Activated CD4-positive, alpha-beta memory T cell treated with anti-CD3 and anti-CD28 coated beads for 36 hours (primary cell): ENCODE measurements at regions of chr7 and their contacts with region 1.

Region 1: GRCh38 chr7:123865517-123866117 is 20.6 kb downstream of the HYAL4 start:
- DNase-seq: peak; percentile 36
- H3K4me3 Mint-ChIP-seq: no peak overlapping the region
- H3K27ac Mint-ChIP-seq: no peak overlapping the region
- H3K4me1 Mint-ChIP-seq: no peaks in the 10 kb centered on the region
- H3K27me3 Mint-ChIP-seq: peaks cover 4% of the 10 kb centered on the region

Region 2: DNA sequence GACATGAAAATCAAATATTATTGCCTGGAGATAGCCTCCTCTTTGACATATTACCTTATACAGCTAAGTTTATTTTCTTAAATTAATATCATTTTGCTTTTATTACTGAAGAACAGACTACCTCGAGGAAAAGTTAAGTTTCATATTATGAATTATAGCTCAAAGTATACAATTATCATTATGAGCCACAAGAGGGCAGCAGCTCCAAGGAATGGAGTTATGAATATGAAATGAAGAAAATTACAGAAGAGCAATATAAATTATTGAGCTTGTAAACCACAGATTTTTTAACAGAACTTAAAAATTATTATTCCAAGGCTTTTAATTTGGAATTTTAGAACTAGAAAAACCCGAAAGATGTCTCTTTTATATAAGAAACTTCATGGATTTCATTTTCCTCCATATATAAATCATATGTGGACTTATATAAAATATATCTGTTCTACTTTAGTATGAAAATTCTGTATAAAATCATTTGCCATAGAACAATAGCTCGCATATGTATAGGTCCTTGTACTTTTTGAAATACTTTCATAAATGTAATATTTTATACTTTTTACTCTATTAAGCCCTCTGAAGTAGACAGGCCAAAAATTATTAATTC is 371.3 kb before region 1 on chr7:
- CTCF ChIA-PET with region 1: interaction called, 5 read pairs
- POLR2A ChIA-PET with region 1: no interaction called
- intact Hi-C with region 1: loop called (anchors 1 kb)
- DNase-seq: peak; percentile 14
- H3K4me3 Mint-ChIP-seq: no peak overlapping the region
- H3K27ac Mint-ChIP-seq: no peak overlapping the region
- H3K4me1 Mint-ChIP-seq: no peaks in the 10 kb centered on the region
- H3K27me3 Mint-ChIP-seq: peaks cover 11% of the 10 kb centered on the region

Region 3: GRCh38 chr7:123624527-123625183 is 241.0 kb before region 1 on chr7:
- CTCF ChIA-PET with region 1: interaction called, 3 read pairs
- POLR2A ChIA-PET with region 1: no interaction called
- intact Hi-C with region 1: loop called (anchors 2 kb)
- DNase-seq: peak; percentile 80
- H3K4me3 Mint-ChIP-seq: no peak overlapping the region
- H3K27ac Mint-ChIP-seq: no peak overlapping the region
- H3K4me1 Mint-ChIP-seq: no peaks in the 10 kb centered on the region
- H3K27me3 Mint-ChIP-seq: no peaks in the 10 kb centered on the region

Region 4: GRCh38 chr7:123635551-123636359 is 229.9 kb before region 1 on chr7:
- CTCF ChIA-PET with region 1: interaction called, 15 read pairs
- POLR2A ChIA-PET with region 1: no interaction called
- intact Hi-C with region 1: loop called (anchors 5 kb)
- DNase-seq: no peak
- H3K4me3 Mint-ChIP-seq: no peak overlapping the region
- H3K27ac Mint-ChIP-seq: no peak overlapping the region
- H3K4me1 Mint-ChIP-seq: no peaks in the 10 kb centered on the region
- H3K27me3 Mint-ChIP-seq: peaks cover 17% of the 10 kb centered on the region

Region 5: DNA sequence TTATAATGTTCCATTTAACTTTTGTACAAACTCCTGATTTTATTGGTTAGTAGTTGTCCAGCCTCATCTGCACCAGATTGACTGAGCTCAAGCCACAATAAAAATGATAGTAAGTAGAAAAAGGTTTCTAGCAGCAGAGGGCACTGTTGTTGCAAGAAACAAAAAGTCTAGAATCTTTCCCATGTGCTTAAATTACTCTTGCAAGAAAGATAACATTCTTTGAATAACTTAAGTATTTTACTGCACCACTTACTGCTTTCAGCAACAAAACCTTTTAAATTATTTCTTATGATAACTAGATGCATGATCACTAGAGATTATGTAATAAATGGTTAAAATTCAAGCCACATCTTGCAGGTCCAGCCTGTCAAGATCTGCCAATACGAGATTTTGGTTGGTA is 182.9 kb before region 1 on chr7:
- CTCF ChIA-PET with region 1: interaction called, 22 read pairs
- POLR2A ChIA-PET with region 1: no interaction called
- intact Hi-C with region 1: loop called (anchors 1 kb)
- DNase-seq: no peak
- H3K4me3 Mint-ChIP-seq: no peak overlapping the region
- H3K27ac Mint-ChIP-seq: no peak overlapping the region
- H3K4me1 Mint-ChIP-seq: no peaks in the 10 kb centered on the region
- H3K27me3 Mint-ChIP-seq: no peaks in the 10 kb centered on the region

Region 6: DNA sequence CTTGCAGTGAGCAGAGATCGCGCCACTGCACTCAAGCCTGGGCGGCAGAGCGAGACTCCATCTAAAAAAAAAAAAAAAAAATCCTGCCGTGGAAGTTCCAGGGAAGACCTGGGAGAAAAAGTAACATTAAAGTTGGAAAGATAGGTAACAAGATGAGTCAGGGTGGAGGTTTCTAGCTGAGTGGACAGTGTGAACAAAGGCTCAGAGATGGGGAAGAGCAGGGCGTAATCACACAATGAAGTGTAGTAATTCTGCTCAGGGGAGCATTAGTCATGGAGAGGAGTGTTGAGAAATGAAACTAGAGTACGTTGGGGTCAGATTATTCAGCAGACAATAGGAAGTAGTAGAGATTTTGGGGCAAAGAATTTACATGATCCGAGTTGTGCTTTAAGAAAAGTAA is 95.2 kb before region 1 on chr7:
- CTCF ChIA-PET with region 1: interaction called, 10 read pairs
- POLR2A ChIA-PET with region 1: no interaction called
- intact Hi-C with region 1: no loop called
- DNase-seq: peak; percentile 31
- H3K4me3 Mint-ChIP-seq: no peak overlapping the region
- H3K27ac Mint-ChIP-seq: no peak overlapping the region
- H3K4me1 Mint-ChIP-seq: peaks cover 12% of the 10 kb centered on the region
- H3K27me3 Mint-ChIP-seq: peaks cover 25% of the 10 kb centered on the region

Region 7: GRCh38 chr7:123797673-123798527 is 67.7 kb before region 1 on chr7:
- CTCF ChIA-PET with region 1: interaction called, 97 read pairs
- POLR2A ChIA-PET with region 1: no interaction called
- intact Hi-C with region 1: loop called (anchors 1 kb)
- DNase-seq: no peak
- H3K4me3 Mint-ChIP-seq: no peak overlapping the region
- H3K27ac Mint-ChIP-seq: no peak overlapping the region
- H3K4me1 Mint-ChIP-seq: no peaks in the 10 kb centered on the region
- H3K27me3 Mint-ChIP-seq: peaks cover 2% of the 10 kb centered on the region

Region 8: GRCh38 chr7:123916240-123916724 is 50.7 kb after region 1 on chr7:
- CTCF ChIA-PET with region 1: no interaction called
- POLR2A ChIA-PET with region 1: no interaction called
- intact Hi-C with region 1: no loop called
- DNase-seq: no peak
- H3K4me3 Mint-ChIP-seq: no peak overlapping the region
- H3K27ac Mint-ChIP-seq: no peak overlapping the region
- H3K4me1 Mint-ChIP-seq: no peaks in the 10 kb centered on the region
- H3K27me3 Mint-ChIP-seq: peaks cover 2% of the 10 kb centered on the region